MCF 10A (cell line): ENCODE measurements at regions of chr13 and their contacts with region 1.

Region 1: GRCh38 chr13:61880578-61881283 is 465.1 kb upstream of the PCDH20 start:
- DNase-seq: peak; percentile 61
- H3K4me3 Mint-ChIP-seq: no peak overlapping the region
- H3K27ac Mint-ChIP-seq: no peak overlapping the region
- H3K4me1 Mint-ChIP-seq: no peaks in the 10 kb centered on the region
- H3K27me3 Mint-ChIP-seq: no peaks in the 10 kb centered on the region
- CTCF ChIP-seq: peak; percentile 25

Region 2: DNA sequence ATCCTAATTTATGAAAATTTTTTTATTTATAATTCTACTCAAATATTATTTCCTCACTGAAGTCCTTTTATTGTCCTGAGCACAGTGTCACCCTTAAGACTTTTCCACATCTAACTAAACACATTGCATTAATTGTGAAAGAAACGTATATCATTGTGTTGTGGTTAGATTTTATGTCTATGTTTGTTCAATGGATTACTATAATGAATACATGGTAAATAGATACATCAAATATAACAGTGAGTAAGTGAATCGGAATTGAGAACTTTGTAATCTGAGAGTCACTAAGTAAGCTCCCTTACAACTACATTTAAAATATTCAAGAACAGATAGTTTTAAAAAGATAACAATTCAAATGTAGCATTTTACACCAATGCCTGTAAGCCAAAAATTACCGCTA is 47.5 kb before region 1 on chr13:
- CTCF ChIA-PET with region 1: no interaction called
- POLR2A ChIA-PET with region 1: no interaction called
- intact Hi-C with region 1: no loop called
- DNase-seq: no peak
- H3K4me3 Mint-ChIP-seq: no peak overlapping the region
- H3K27ac Mint-ChIP-seq: no peak overlapping the region
- H3K4me1 Mint-ChIP-seq: no peaks in the 10 kb centered on the region
- H3K27me3 Mint-ChIP-seq: no peaks in the 10 kb centered on the region
- CTCF ChIP-seq: no peak

Region 3: GRCh38 chr13:61927648-61928047 is 46.9 kb after region 1 on chr13:
- CTCF ChIA-PET with region 1: no interaction called
- POLR2A ChIA-PET with region 1: no interaction called
- intact Hi-C with region 1: no loop called
- DNase-seq: no peak
- H3K4me3 Mint-ChIP-seq: no peak overlapping the region
- H3K27ac Mint-ChIP-seq: no peak overlapping the region
- H3K4me1 Mint-ChIP-seq: no peaks in the 10 kb centered on the region
- H3K27me3 Mint-ChIP-seq: peaks cover 28% of the 10 kb centered on the region
- CTCF ChIP-seq: no peak

Region 4: GRCh38 chr13:61954092-61954491 is 73.4 kb after region 1 on chr13:
- CTCF ChIA-PET with region 1: interaction called, 4 read pairs
- POLR2A ChIA-PET with region 1: no interaction called
- intact Hi-C with region 1: loop called (anchors 2 kb)
- DNase-seq: peak; percentile 52
- H3K4me3 Mint-ChIP-seq: no peak overlapping the region
- H3K27ac Mint-ChIP-seq: no peak overlapping the region
- H3K4me1 Mint-ChIP-seq: no peaks in the 10 kb centered on the region
- H3K27me3 Mint-ChIP-seq: peaks cover 23% of the 10 kb centered on the region
- CTCF ChIP-seq: peak; percentile 45